H1 (cell line): ENCODE measurements at regions of chr20 and their contacts with region 1.

Region 1: GRCh38 chr20:41738604-41739206 is 120.5 kb upstream of the CHD6 start:
- DNase-seq: peak in 1 of 2 experiments; percentile 74
- H3K4me3 ChIP-seq: no peak overlapping the region
- H3K27ac ChIP-seq: no peak overlapping the region
- H3K4me1 ChIP-seq: peaks cover 0 to 3% (median under 1%) of the 10 kb centered on the region in 4 experiments; a peak in 4 of 7 replicates
- H3K27me3 ChIP-seq: no peaks in the 10 kb centered on the region
- CTCF ChIP-seq: peak; percentile 83 to 91 (median 87)
- EP300 ChIP-seq: no peak
- POLR2A ChIP-seq: no peak
- RAD21 ChIP-seq: peak; percentile 94 to 97

Region 2: DNA sequence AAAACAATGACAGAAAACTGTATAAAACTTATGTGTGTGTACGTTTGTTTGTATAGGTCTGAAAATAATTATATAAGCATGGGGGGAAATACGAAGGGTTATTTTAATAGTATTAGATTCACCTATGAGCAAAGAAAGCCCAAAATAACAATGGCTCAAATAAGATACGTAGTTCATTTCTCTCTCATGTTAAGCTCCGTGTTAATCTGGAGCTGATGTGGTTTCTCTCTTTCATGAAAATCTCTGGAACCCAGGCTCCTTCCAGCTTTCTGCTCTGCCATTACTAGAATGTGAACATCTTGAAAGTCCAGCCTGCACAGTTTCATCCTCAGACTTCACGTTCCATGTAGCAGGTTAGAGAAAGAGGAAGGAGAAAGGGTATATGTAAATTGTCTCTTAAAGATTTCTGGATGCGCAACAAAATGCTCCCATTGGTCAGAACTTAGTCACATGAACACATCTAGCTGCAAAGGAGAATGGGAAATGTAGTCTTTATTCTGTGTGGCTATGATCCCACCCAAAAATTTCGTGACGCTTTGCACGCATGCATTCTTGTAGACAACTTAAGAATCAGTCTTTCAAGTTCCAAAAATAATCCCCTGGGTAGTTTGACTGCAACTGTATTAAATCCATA is 74.2 kb before region 1 on chr20:
- CTCF ChIA-PET with region 1: no interaction called
- POLR2A ChIA-PET with region 1: no interaction called
- DNase-seq: no peak
- H3K4me3 ChIP-seq: no peak overlapping the region
- H3K27ac ChIP-seq: no peak overlapping the region
- H3K4me1 ChIP-seq: no peaks in the 10 kb centered on the region
- H3K27me3 ChIP-seq: no peaks in the 10 kb centered on the region
- CTCF ChIP-seq: no peak
- EP300 ChIP-seq: no peak
- POLR2A ChIP-seq: no peak
- RAD21 ChIP-seq: no peak

Region 3: GRCh38 chr20:41693136-41693979 is 45.3 kb before region 1 on chr20:
- CTCF ChIA-PET with region 1: interaction called, 11 read pairs
- POLR2A ChIA-PET with region 1: no interaction called
- DNase-seq: peak; percentile 65 to 70
- H3K4me3 ChIP-seq: peak overlapping the region; percentile 74 to 90 (median 80)
- H3K27ac ChIP-seq: peak overlapping the region; percentile 53; the same call in 1 of the 2 replicates
- H3K4me1 ChIP-seq: peaks cover 0 to 6% (median 1%) of the 10 kb centered on the region in 4 experiments; a peak in 1 of 7 replicates
- H3K27me3 ChIP-seq: no peaks in the 10 kb centered on the region
- CTCF ChIP-seq: peak in 2 of 3 experiments; percentile 26 to 44; a peak in 2 of 4 replicates
- EP300 ChIP-seq: peak in 1 of 2 experiments; percentile 65; a peak in 1 of 3 replicates
- POLR2A ChIP-seq: peak in 1 of 2 experiments; percentile 84; a peak in 2 of 3 replicates
- RAD21 ChIP-seq: 0 out of 4 replicates have a peak, but pooled peaks of 1 of the 2 experiments have one; percentile 2

Region 4: DNA sequence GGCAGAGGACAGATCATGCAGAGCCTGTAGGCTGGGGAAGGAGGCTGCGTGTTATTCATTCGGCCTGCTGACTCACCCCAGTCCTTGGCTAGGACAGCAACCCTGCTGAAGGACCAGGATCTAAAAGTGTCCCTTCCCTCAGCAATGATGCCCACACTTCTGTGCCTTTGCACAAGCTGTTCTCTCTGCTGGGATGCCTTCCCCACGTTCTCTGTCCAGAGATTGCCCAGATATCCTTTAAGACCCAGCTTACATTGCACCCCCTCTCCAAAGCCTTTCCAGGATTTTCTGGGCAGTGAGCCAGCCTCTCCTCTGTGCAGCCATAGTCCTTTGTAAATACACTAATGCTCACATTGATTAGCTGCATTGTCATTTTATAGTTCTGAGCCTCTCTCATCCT is 21.2 kb before region 1 on chr20:
- CTCF ChIA-PET with region 1: interaction called, 14 read pairs
- POLR2A ChIA-PET with region 1: no interaction called
- DNase-seq: no peak
- H3K4me3 ChIP-seq: no peak overlapping the region
- H3K27ac ChIP-seq: no peak overlapping the region
- H3K4me1 ChIP-seq: no peaks in the 10 kb centered on the region
- H3K27me3 ChIP-seq: no peaks in the 10 kb centered on the region
- CTCF ChIP-seq: no peak
- EP300 ChIP-seq: no peak
- POLR2A ChIP-seq: no peak
- RAD21 ChIP-seq: no peak

Region 5: DNA sequence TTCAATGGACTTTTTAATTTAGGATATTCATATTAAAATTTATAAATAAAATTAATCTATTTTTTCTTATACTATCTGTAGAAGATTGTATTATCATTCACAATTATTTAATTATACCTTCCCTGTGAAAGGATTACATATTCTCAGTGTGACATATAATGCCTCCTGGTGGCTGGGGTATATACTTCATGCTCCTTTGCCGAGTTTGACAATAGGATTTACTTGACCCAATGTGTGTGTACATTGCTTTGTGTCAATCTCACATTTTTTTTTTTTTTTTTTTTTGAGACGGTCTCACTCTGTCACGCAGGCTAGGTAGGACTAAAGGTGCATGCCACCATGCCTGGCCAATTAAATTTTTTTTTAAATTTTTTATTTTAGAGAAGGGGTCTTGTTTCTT is 109.5 kb after region 1 on chr20:
- CTCF ChIA-PET with region 1: interaction called, 21 read pairs
- POLR2A ChIA-PET with region 1: no interaction called
- DNase-seq: no peak
- H3K4me3 ChIP-seq: no peak overlapping the region
- H3K27ac ChIP-seq: no peak overlapping the region
- H3K4me1 ChIP-seq: no peaks in the 10 kb centered on the region
- H3K27me3 ChIP-seq: no peaks in the 10 kb centered on the region
- CTCF ChIP-seq: peak in 2 of 3 experiments; percentile 25 to 45; a peak in 2 of 4 replicates
- EP300 ChIP-seq: no peak
- POLR2A ChIP-seq: no peak
- RAD21 ChIP-seq: peak; percentile 51

Region 6: DNA sequence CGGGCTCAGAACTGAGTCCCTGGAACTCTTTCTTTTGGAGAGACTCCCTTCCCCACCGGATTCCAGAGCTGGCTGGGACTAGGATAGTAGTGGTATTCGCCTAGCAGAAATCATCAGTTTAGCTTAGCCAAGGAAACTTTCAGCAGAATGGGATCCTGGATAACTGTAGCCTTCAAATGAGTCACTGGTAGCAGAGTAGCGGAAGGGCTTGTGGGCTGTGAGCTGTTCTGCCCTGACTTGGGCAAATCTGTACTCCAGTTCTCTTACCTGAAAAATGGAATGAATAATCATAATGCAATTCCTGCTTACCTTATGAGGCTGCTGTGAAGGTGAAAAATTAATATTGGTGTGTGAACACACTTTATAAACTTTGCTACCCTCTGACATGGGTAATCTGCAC is 123.8 kb after region 1 on chr20:
- CTCF ChIA-PET with region 1: interaction called, 13 read pairs
- POLR2A ChIA-PET with region 1: no interaction called
- DNase-seq: no peak
- H3K4me3 ChIP-seq: no peak overlapping the region
- H3K27ac ChIP-seq: no peak overlapping the region
- H3K4me1 ChIP-seq: peaks cover 0 to 4% (median 2%) of the 10 kb centered on the region in 4 experiments; a peak in 2 of 7 replicates
- H3K27me3 ChIP-seq: no peaks in the 10 kb centered on the region
- CTCF ChIP-seq: no peak
- EP300 ChIP-seq: no peak
- POLR2A ChIP-seq: no peak
- RAD21 ChIP-seq: no peak

Region 7: DNA sequence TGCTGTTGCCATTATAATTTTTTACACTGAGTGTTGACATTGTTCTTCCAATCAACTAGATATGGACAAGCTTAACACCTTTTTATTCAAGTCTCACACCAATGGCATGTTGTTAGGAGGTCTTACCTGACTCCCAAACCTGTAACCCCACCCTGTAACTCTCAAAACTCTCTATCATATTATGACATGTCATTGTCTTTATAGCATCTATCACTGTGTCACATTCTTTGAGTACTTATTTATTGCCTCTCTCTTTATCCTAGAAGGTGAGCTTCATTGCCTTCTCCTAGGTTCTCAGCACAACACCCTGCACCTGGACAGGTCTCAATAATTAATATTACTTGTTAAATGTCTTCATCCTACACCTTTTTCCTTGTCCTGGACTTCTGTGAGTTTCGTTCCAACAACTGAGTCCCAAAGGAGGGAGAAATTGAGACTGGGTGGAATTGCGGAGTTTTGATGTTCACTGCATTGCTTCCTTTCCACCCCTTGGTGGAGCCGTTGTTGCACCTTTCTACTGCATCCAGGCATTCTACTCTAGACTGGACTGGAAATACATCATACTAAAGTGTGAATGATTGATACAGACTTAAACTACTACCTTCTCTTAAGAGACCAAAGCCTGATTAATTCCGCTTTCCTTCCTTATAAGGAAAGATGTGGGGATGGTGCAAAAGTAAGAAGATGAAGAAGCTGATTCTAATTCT is 217.4 kb after region 1 on chr20:
- CTCF ChIA-PET with region 1: interaction called, 28 read pairs
- POLR2A ChIA-PET with region 1: no interaction called
- DNase-seq: peak in 1 of 2 experiments; percentile 3
- H3K4me3 ChIP-seq: no peak overlapping the region
- H3K27ac ChIP-seq: no peak overlapping the region
- H3K4me1 ChIP-seq: no peaks in the 10 kb centered on the region
- H3K27me3 ChIP-seq: no peaks in the 10 kb centered on the region; a peak in 1 of 7 replicates
- CTCF ChIP-seq: peak; percentile 60 to 84 (median 79)
- EP300 ChIP-seq: no peak
- POLR2A ChIP-seq: no peak
- RAD21 ChIP-seq: peak; percentile 96